B cell (primary cell): ENCODE measurements at regions of chr3 and their contacts with region 1.

Region 1: GRCh38 chr3:27484015-27484844 is at the start of gene SLC4A7:
- DNase-seq: peak; percentile 98
- ATAC-seq: peak; percentile 91
- H3K4me3 ChIP-seq: peak within 1 kb of the TSS; percentile 65 to 99 (median 81)
- H3K4me3 Mint-ChIP-seq: peak within 1 kb of the TSS; percentile 100
- H3K27ac ChIP-seq: peak within 1 kb of the TSS; percentile 64 to 90
- H3K27ac Mint-ChIP-seq: peak within 1 kb of the TSS; percentile 99
- H3K4me1 ChIP-seq: peaks cover 35 to 44% of the 10 kb centered on the region in 2 donors
- H3K4me1 Mint-ChIP-seq: peaks cover 38% of the 10 kb centered on the region
- H3K27me3 ChIP-seq: no peaks in the 10 kb centered on the region
- H3K27me3 Mint-ChIP-seq: no peaks in the 10 kb centered on the region
- CTCF ChIP-seq: no peak
- total RNA-seq, gene SLC4A7: 46.9 and 49.6 TPM in 2 replicates

Region 2: GRCh38 chr3:25789596-25790556 is 1694.4 kb before region 1 on chr3 and contains the start of gene OXSM:
- CTCF ChIA-PET with region 1: no interaction called
- POLR2A ChIA-PET with region 1: no interaction called
- intact Hi-C with region 1: loop called (anchors 10 kb)
- DNase-seq: peak; percentile 98
- ATAC-seq: peak; percentile 94
- H3K4me3 ChIP-seq: peak within 1 kb of the TSS; percentile 60 to 95 (median 67)
- H3K4me3 Mint-ChIP-seq: peak within 1 kb of the TSS; percentile 97
- H3K27ac ChIP-seq: peak within 1 kb of the TSS; percentile 95 to 96
- H3K27ac Mint-ChIP-seq: peak within 1 kb of the TSS; percentile 94
- H3K4me1 ChIP-seq: peaks cover 14 to 16% of the 10 kb centered on the region in 2 donors
- H3K4me1 Mint-ChIP-seq: peaks cover 39% of the 10 kb centered on the region
- H3K27me3 ChIP-seq: no peaks in the 10 kb centered on the region
- H3K27me3 Mint-ChIP-seq: no peaks in the 10 kb centered on the region
- CTCF ChIP-seq: no peak
- total RNA-seq, gene OXSM: 15.4 and 18.7 TPM in 2 replicates

Region 3: DNA sequence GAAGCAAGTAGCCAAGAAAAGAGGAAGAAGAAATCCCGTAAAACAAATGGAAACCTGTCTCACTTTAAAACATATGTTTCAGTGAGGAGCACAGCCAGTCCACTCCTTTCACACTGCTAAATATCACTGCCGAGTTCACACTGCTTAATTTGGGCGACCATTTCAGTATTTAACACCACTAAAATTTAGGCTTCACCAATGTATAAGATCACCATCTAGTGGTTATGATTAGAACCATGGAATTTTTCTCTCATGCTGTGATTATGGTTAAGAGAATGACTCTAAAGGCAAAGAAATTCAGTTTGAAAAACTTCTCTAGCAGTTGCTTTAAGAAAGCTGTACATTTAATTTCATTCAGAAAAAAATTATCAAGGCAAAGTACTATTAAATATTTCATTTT is 16.7 kb before region 1 on chr3:
- CTCF ChIA-PET with region 1: interaction called, 18 read pairs
- POLR2A ChIA-PET with region 1: interaction called, 4 read pairs
- intact Hi-C with region 1: loop called (anchors 2 kb)
- DNase-seq: peak; percentile 59
- ATAC-seq: peak; percentile 71
- H3K4me3 ChIP-seq: no peak overlapping the region
- H3K4me3 Mint-ChIP-seq: peak overlapping the region; percentile 6
- H3K27ac ChIP-seq: no peak overlapping the region
- H3K27ac Mint-ChIP-seq: peak overlapping the region; percentile 3
- H3K4me1 ChIP-seq: peaks cover 0 to 3% of the 10 kb centered on the region in 2 donors
- H3K4me1 Mint-ChIP-seq: peaks cover 24% of the 10 kb centered on the region
- H3K27me3 ChIP-seq: no peaks in the 10 kb centered on the region
- H3K27me3 Mint-ChIP-seq: no peaks in the 10 kb centered on the region
- CTCF ChIP-seq: peak; percentile 75

Region 4: DNA sequence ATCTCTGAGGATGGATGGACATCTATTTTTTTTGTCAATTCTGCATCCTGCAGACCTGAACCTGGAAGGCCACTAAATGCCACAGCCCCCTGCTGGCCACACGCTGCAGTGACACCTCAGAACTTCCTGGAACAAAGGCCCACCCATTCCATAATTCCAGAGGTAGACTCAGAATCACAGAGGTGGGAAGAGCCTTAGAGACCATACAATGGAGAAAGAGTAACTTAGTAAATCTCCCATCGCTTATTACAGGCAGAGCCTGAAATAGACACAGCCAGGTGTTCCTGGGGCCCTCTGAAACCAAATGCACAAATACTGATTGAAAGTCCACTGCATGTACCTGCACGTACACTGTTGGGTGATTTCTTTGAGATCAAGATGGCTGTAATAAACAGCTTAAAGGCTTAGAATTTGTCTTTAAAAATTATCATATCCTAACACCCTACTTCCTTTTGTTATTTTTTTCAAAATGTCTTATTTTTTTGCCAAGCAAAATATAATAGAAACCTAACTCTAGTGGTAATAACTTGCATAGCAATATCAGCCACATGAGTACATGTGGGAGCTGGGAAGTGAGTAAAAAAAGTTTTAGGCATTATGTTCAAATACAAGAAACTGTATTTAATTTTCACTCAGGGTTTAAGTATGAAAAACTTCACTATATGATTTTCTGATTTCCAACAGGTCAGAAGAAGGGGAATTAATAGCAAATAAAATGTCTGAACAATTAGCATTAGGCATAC is 175.2 kb after region 1 on chr3:
- CTCF ChIA-PET with region 1: no interaction called
- POLR2A ChIA-PET with region 1: no interaction called
- intact Hi-C with region 1: no loop called
- DNase-seq: peak; percentile 52
- ATAC-seq: peak; percentile 62
- H3K4me3 ChIP-seq: no peak overlapping the region
- H3K4me3 Mint-ChIP-seq: no peak overlapping the region
- H3K27ac ChIP-seq: no peak overlapping the region
- H3K27ac Mint-ChIP-seq: no peak overlapping the region
- H3K4me1 ChIP-seq: peaks cover 0 to 2% of the 10 kb centered on the region in 2 donors
- H3K4me1 Mint-ChIP-seq: peaks cover 8% of the 10 kb centered on the region
- H3K27me3 ChIP-seq: no peaks in the 10 kb centered on the region
- H3K27me3 Mint-ChIP-seq: no peaks in the 10 kb centered on the region
- CTCF ChIP-seq: peak; percentile 85

Region 5: GRCh38 chr3:27681245-27681748 is 197.1 kb after region 1 on chr3:
- CTCF ChIA-PET with region 1: no interaction called
- POLR2A ChIA-PET with region 1: interaction called, 13 read pairs
- intact Hi-C with region 1: loop called (anchors 1 kb)
- DNase-seq: peak; percentile 87
- ATAC-seq: peak; percentile 90
- H3K4me3 ChIP-seq: peak overlapping the region in 1 of 5 experiments; percentile 26
- H3K4me3 Mint-ChIP-seq: peak overlapping the region; percentile 51
- H3K27ac ChIP-seq: no peak overlapping the region
- H3K27ac Mint-ChIP-seq: peak overlapping the region; percentile 28
- H3K4me1 ChIP-seq: peaks cover 5 to 17% of the 10 kb centered on the region in 2 donors
- H3K4me1 Mint-ChIP-seq: peaks cover 17% of the 10 kb centered on the region
- H3K27me3 ChIP-seq: peaks cover 0 to 3% (median 0%) of the 10 kb centered on the region in 4 experiments
- H3K27me3 Mint-ChIP-seq: peaks cover 4% of the 10 kb centered on the region
- CTCF ChIP-seq: peak; percentile 79

Region 6: GRCh38 chr3:28022916-28023315 is 538.7 kb after region 1 on chr3:
- CTCF ChIA-PET with region 1: no interaction called
- POLR2A ChIA-PET with region 1: no interaction called
- intact Hi-C with region 1: no loop called
- DNase-seq: no peak
- ATAC-seq: no peak
- H3K4me3 ChIP-seq: no peak overlapping the region
- H3K4me3 Mint-ChIP-seq: no peak overlapping the region
- H3K27ac ChIP-seq: no peak overlapping the region
- H3K27ac Mint-ChIP-seq: no peak overlapping the region
- H3K4me1 ChIP-seq: no peaks in the 10 kb centered on the region
- H3K4me1 Mint-ChIP-seq: no peaks in the 10 kb centered on the region
- H3K27me3 ChIP-seq: no peaks in the 10 kb centered on the region
- H3K27me3 Mint-ChIP-seq: no peaks in the 10 kb centered on the region
- CTCF ChIP-seq: no peak

Region 7: GRCh38 chr3:28348629-28349483 is 864.6 kb after region 1 on chr3 and contains the starts of genes AZI2 and ZCWPW2:
- CTCF ChIA-PET with region 1: no interaction called
- POLR2A ChIA-PET with region 1: interaction called, 5 read pairs
- intact Hi-C with region 1: loop called (anchors 1 kb)
- DNase-seq: peak; percentile 94
- ATAC-seq: peak; percentile 88
- H3K4me3 ChIP-seq: peak within 1 kb of the TSS; percentile 74 to 100 (median 92)
- H3K4me3 Mint-ChIP-seq: peak within 1 kb of the TSS; percentile 99
- H3K27ac ChIP-seq: peak within 1 kb of the TSS; percentile 96 to 99
- H3K27ac Mint-ChIP-seq: peak within 1 kb of the TSS; percentile 99
- H3K4me1 ChIP-seq: peaks cover 14 to 15% of the 10 kb centered on the region in 2 donors
- H3K4me1 Mint-ChIP-seq: peaks cover 39% of the 10 kb centered on the region
- H3K27me3 ChIP-seq: no peaks in the 10 kb centered on the region
- H3K27me3 Mint-ChIP-seq: no peaks in the 10 kb centered on the region
- CTCF ChIP-seq: peak; percentile 34
- total RNA-seq, gene AZI2: 21.1 and 29.1 TPM in 2 replicates
- total RNA-seq, gene ZCWPW2: not detected in 2 replicates